Dorsolateral prefrontal cortex (tissue), 120 donors: ENCODE measurements at regions of chr9 and their contacts with region 1.

Region 1: DNA sequence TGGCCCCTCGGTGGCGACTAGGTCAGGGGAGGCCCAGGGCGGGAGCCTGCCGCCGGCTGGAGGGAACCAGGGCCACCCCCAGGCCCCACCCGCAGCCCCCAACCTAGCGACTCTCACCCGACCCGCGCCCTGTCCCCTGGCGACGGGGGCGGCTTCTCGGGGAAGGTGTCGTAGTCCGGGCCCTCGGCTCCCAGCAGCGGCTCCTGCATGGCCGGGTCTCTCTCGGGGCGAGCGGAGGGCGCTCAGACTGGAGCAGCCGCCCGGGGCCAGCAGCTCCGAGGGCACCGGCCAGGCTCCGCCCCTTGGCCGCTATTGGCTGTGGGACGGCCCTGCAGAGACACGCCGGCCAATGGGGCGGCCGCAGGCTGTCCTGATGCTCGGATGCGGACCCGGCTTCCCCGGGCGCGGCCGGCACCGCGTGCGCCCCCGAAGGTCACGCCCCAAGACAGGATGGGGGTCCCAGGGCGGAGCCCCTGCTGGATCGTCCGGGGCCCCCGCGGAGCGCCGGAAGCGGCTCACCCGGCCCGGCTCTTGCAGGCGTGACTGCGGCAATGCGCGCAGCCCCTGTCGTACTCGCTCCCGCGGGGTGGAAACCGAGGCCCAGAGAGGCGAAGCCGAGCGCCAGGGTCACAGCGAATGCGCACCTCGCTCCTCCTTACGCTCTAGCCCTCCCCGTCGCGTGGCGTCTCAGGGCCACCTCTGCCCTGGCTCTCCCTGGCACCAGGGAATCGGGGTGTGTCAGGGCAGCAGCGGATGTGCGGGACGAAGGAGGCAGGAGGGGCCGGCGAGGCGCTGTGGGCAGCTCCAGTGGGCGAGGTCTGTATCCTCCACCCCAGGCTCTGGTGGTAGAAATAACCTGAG is at the start of gene SLC2A6:
- DNase-seq: peak; percentile 88 to 96 (median 94)
- H3K4me3 ChIP-seq: peak within 1 kb of the TSS; percentile 47 to 91 (median 81)
- H3K27ac ChIP-seq: peak within 1 kb of the TSS in 57 of 59 donors; percentile 29 to 93 (median 80)
- H3K27me3 ChIP-seq: no peaks in the 10 kb centered on the region
- CTCF ChIP-seq: peak in 18 of 56 donors; percentile 8 to 40 (median 20)
- total RNA-seq, gene SLC2A6: 14.8 to 39.2 (median 25.7) TPM

Region 2: GRCh38 chr9:133347985-133348717 is 130.9 kb before region 1 on chr9 and contains the starts of genes MED22 and RPL7A:
- intact Hi-C with region 1: loop called in 1 of 2 experiments (anchors 5 kb)
- DNase-seq: peak; percentile 75 to 97 (median 90)
- H3K4me3 ChIP-seq: peak within 1 kb of the TSS; percentile 66 to 100 (median 95)
- H3K27ac ChIP-seq: peak within 1 kb of the TSS; percentile 39 to 99 (median 92)
- H3K27me3 ChIP-seq: no peaks in the 10 kb centered on the region
- CTCF ChIP-seq: peak in 30 of 56 donors; percentile 11 to 48 (median 26)
- total RNA-seq, gene MED22: 19.2 to 41.3 (median 30.0) TPM
- total RNA-seq, gene RPL7A: 512 to 837 (median 653) TPM

Region 3: GRCh38 chr9:133459476-133460404 is 19.3 kb before region 1 on chr9 and contains the start of gene CACFD1:
- intact Hi-C with region 1: loop called in 1 of 2 experiments (anchors 2 kb)
- DNase-seq: peak; percentile 94 to 99 (median 97)
- H3K4me3 ChIP-seq: peak within 1 kb of the TSS; percentile 55 to 96 (median 80)
- H3K27ac ChIP-seq: peak within 1 kb of the TSS; percentile 83 to 99 (median 97)
- H3K27me3 ChIP-seq: no peaks in the 10 kb centered on the region
- CTCF ChIP-seq: peak in 8 of 56 donors; percentile 2 to 20 (median 12)
- total RNA-seq, gene CACFD1: 12.0 to 29.6 (median 18.7) TPM